GM12878 (cell line): ENCODE measurements at regions of chr1 and their contacts with region 1.

Region 1: GRCh38 chr1:198549866-198550265 is 9.4 kb upstream of the ATP6V1G3 start:
- DNase-seq: peak; percentile 54
- ATAC-seq: peak; percentile 94
- H3K4me3 ChIP-seq: no peak overlapping the region
- H3K27ac ChIP-seq: no peak overlapping the region
- H3K4me1 ChIP-seq: peaks cover 15% of the 10 kb centered on the region
- H3K27me3 ChIP-seq: no peaks in the 10 kb centered on the region
- CTCF ChIP-seq: no peak
- EP300 ChIP-seq: peak; percentile 13 to 27; a peak in 1 of 4 replicates
- POLR2A ChIP-seq: no peak
- RAD21 ChIP-seq: 0 out of 2 replicates have a peak, but pooled peaks have one; percentile 8

Region 2: DNA sequence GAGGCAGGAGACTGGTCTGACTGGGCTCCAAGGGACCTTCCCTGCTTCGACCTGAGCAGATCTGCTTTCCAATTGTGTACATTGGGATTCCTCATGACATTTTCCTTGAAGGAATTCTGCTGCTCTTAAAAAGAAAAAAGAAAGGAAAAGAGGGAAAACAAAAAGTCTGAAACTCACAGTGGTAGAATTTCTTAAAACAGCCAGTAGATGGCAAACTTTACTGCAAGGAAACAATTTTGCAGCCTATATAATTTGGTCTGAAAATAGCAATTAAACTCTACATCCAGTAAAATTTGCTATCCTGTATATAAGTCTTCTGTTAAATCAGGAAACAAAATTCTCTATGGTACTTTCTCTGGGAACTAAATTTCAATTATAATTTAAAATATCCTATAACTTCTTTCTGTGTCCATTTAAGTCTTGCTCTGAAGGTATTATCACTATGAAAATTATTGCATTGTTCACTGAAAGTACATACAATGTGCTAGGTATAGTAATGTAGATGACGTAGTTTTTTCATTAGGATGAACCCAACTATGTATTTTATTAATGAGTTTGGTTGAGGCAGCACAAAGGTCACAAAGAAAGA is 1222.0 kb before region 1 on chr1:
- CTCF ChIA-PET with region 1: no interaction called
- POLR2A ChIA-PET with region 1: no interaction called
- RAD21 ChIA-PET with region 1: no interaction called
- SMC1A ChIA-PET with region 1: no interaction called
- in situ Hi-C with region 1: no loop called
- intact Hi-C with region 1: no loop called
- DNase-seq: no peak
- ATAC-seq: peak; percentile 53; the same call in 2 of the 3 replicates
- H3K4me3 ChIP-seq: no peak overlapping the region
- H3K27ac ChIP-seq: no peak overlapping the region
- H3K4me1 ChIP-seq: no peaks in the 10 kb centered on the region
- H3K27me3 ChIP-seq: no peaks in the 10 kb centered on the region
- CTCF ChIP-seq: peak; percentile 38 to 52 (median 39); a peak in 5 of 6 replicates
- EP300 ChIP-seq: no peak
- POLR2A ChIP-seq: no peak
- RAD21 ChIP-seq: peak; percentile 41; the same call in 1 of the 2 replicates

Region 3: DNA sequence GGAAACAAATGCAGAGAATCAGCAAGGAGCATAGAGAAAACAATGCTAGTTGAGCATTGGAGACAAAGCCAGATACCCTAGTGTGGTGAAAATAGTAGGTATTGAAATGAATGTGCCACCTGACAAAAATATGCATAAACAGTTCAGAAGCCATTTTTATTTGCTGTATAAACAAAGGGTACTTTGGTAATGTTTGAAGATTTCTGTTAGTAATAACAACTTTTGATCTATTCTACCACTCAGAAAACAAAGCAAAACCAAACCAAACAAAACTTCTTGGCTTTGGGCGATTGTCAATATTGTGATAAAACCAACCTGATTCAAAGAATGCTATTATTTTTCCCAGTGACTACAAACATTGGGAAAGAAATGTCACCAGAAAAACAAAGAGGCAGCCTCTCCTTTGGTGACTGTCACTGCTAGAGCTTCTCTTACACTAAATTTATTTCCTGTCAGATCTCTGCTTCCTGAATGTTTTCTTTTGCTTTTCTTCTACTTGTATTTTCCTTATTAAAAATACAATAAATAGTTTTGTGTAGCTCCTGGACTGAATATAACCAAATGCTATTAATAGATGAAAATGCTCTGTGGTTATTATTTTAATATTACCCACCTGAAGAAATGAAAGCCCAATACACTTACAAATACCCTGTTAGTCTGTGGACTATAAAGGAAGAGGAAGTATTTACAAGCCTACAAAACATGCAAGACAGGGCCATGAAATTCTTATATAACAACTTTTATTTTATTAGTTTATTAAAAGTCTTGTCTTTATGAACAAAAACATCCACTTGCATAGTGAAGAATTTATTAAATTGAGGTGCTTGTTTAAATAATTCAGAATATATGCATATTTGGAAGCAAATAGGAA is 15.1 kb before region 1 on chr1:
- CTCF ChIA-PET with region 1: interaction called, 3 read pairs
- POLR2A ChIA-PET with region 1: no interaction called
- RAD21 ChIA-PET with region 1: interaction called, 4 read pairs
- SMC1A ChIA-PET with region 1: interaction called, 10 read pairs
- in situ Hi-C with region 1: no loop called
- intact Hi-C with region 1: no loop called
- DNase-seq: no peak
- ATAC-seq: peak; percentile 22; the same call in 1 of the 3 replicates
- H3K4me3 ChIP-seq: no peak overlapping the region
- H3K27ac ChIP-seq: no peak overlapping the region
- H3K4me1 ChIP-seq: no peaks in the 10 kb centered on the region
- H3K27me3 ChIP-seq: no peaks in the 10 kb centered on the region
- CTCF ChIP-seq: no peak
- EP300 ChIP-seq: no peak
- POLR2A ChIP-seq: no peak
- RAD21 ChIP-seq: no peak